Activated T-helper 2 cell treated with anti-CD3 and anti-CD28 coated beads, Interferon-gamma antibody, Interleukin-2, Interleukin-4, amounts not matched to agents 10 μg/mL and 5 μg/mL and 100 μg/mL, durations not matched to agents 14 hours and 24 hours and 36 hours (primary cell): ENCODE measurements at regions of chr12 and their contacts with region 1.

Region 1: GRCh38 chr12:39990122-39991101 is 115.5 kb downstream of the SLC2A13 start:
- DNase-seq: peak; percentile 18
- H3K4me3 Mint-ChIP-seq: no peak overlapping the region
- H3K27ac Mint-ChIP-seq: no peak overlapping the region
- H3K4me1 Mint-ChIP-seq: no peaks in the 10 kb centered on the region
- H3K27me3 Mint-ChIP-seq: no peaks in the 10 kb centered on the region

Region 2: GRCh38 chr12:39319187-39319586 is 671.2 kb before region 1 on chr12:
- intact Hi-C with region 1: loop called (anchors 5 kb)
- DNase-seq: no peak
- H3K4me3 Mint-ChIP-seq: no peak overlapping the region
- H3K27ac Mint-ChIP-seq: no peak overlapping the region
- H3K4me1 Mint-ChIP-seq: no peaks in the 10 kb centered on the region
- H3K27me3 Mint-ChIP-seq: no peaks in the 10 kb centered on the region

Region 3: DNA sequence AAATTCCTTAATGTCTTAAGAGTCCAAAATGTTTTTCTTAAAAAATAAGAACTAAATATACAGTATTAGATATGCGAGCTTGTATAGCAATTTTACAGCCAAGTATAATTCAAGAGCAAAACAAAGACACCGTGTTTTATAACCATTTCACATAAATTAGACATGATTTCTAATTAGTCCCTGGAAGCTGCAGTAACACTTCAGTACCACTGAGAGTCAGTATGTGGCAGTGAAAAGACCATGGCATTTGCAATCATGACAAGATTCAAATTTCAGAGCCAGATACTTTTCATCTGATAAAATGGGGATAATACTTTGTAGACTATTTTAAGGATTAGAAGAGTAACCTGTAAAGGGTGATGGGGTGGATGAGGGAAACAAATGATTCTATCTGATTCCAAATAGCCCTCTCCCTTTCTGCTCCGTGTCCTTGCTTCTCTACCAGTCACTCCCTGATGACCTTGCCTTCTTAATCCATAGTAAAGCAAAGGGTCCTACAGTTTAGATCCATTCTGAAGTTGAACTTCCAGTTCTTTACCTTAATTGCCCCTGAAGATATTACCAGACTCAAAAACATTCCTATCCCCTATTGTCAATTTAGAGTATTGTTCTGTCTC is 225.4 kb before region 1 on chr12:
- intact Hi-C with region 1: loop called (anchors 2 kb)
- DNase-seq: no peak
- H3K4me3 Mint-ChIP-seq: no peak overlapping the region
- H3K27ac Mint-ChIP-seq: no peak overlapping the region
- H3K4me1 Mint-ChIP-seq: no peaks in the 10 kb centered on the region
- H3K27me3 Mint-ChIP-seq: peaks cover 2% of the 10 kb centered on the region

Region 4: DNA sequence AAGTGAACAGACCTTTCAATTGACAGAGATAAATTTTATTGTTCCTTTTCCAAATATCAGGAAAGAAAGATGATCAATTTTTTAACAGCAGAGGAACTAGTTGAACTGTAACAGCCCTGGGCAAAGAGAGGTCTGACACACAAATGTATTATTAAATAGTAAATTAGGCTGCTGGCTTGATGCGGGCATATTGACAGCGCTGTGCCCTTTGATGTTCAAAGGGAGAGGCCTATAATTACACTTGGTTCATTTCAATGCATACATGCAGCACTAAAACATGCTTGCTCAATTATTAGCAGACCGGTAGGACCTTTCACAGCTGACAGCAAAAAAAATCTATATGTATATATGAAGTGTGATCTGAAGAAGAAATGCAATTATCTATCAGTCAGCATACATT is 104.3 kb before region 1 on chr12:
- intact Hi-C with region 1: no loop called
- DNase-seq: no peak
- H3K4me3 Mint-ChIP-seq: no peak overlapping the region
- H3K27ac Mint-ChIP-seq: no peak overlapping the region
- H3K4me1 Mint-ChIP-seq: no peaks in the 10 kb centered on the region
- H3K27me3 Mint-ChIP-seq: no peaks in the 10 kb centered on the region

Region 5: GRCh38 chr12:39912211-39912978 is 78.0 kb before region 1 on chr12:
- intact Hi-C with region 1: no loop called
- DNase-seq: no peak
- H3K4me3 Mint-ChIP-seq: no peak overlapping the region
- H3K27ac Mint-ChIP-seq: no peak overlapping the region
- H3K4me1 Mint-ChIP-seq: no peaks in the 10 kb centered on the region
- H3K27me3 Mint-ChIP-seq: peaks cover 1% of the 10 kb centered on the region